Left colon (tissue), 2 donors: ENCODE measurements at regions of chr1 and their contacts with region 1.

Region 1: DNA sequence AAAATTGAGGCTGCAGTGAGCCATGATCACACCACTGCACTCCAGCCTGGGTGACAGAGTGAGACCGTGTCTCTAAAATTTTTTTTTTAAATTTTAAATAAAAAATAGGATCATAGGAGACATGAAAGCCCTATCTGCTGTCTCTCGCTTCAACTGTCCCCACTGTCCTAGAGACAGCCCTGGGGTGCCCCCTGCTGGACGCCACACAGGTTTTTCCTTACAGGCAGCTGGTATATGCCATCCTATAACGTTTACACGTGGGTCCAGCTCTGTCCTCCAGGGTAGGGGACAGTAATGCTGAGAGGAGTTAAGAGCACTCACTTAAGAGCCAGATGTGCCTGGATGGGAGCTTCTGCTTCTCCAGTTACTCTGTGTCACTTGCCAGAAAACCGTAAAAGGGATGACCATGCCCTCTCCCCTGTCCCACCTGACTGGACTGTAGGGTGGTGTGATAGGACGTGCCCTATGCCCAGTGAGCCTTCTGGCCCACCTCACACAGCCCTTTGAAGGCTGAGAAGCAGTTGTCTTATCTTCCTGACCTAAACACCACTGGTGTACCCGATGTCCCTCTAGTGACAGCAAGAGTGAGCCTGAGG is 8.5 kb downstream of the FBXO2 start:
- DNase-seq: peak; percentile 61 to 90
- ATAC-seq: peak; percentile 45

Region 2: DNA sequence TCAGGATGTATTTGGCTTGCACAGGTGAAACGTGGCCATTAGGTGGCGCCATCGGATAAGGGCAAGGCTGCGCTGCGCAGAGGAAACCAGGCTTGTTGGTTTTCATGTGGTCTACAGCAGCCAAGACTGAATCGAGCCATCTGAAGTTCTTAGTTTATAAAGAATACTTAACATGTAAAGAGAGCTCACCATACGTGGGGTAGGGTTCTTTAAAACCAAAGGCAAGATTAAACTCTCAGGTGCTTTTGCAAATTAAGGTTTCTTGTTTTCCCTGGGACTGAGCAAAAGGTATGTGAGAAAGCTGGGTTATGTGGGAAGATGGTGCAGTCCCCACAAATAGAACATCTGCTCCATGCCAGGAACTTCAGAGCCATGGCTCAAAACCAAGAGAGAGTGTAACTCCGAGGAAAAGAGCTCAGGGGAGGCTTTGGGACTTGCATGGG is 608.0 kb before region 1 on chr1:
- intact Hi-C with region 1: loop called (anchors 5 kb)
- DNase-seq: peak; percentile 70 to 91
- ATAC-seq: peak; percentile 95

Region 3: DNA sequence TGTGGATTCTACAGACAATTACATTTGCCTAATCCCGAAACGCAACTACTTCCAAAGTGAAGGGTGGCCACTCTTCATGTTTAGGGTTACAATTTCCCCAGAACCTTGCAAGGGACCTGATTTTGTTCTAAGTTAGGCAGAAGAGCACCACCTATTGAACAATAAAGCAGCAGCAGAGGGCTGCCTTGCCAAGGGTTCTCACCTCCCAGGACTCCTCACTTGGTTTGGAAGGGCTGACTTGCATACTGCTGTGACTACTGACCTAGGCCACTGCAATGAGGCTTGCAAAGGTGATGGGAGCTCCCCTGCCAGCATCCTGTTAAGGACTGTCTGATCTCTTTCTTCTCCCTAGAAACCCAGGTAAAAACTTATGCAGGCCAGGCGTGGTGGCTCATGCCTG is 397.6 kb before region 1 on chr1:
- intact Hi-C with region 1: loop called (anchors 5 to 10 kb)
- DNase-seq: no peak
- ATAC-seq: no peak

Region 4: DNA sequence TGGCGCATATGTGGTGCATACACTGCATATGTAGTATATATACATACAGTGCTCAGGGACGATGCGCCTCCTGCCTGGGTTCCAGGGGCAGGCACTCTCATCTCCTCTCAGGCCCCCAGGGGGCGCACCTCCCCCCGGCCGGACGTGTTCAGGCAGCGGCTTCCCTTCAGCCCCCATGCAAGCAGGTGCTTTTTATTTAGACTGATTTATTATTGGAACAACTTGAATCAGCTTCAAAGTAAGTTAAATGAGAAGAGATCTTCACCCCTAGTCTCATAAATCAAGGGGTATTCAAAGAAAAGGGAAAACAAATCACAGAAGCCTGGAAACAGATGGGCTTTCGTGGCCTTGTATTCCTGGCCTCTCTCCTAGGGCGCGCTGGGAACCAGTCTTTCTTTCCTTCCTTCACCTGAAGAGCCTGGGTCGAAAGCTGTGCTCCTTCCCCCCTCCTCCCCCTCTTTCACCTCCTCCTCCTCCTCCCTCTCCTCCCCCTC is 308.1 kb before region 1 on chr1:
- intact Hi-C with region 1: loop called in 1 of 2 experiments (anchors 5 kb)
- DNase-seq: peak in 1 of 2 donors; percentile 71
- ATAC-seq: peak; percentile 54

Region 5: GRCh38 chr1:11749203-11749689 is 103.5 kb after region 1 on chr1:
- intact Hi-C with region 1: no loop called
- DNase-seq: peak in 1 of 2 donors; percentile 67
- ATAC-seq: peak; percentile 97